Thyroid gland (tissue), 4 donors: ENCODE measurements at regions of chr16 and their contacts with region 1.

Region 1: GRCh38 chr16:81730090-81731051 is 48.7 kb upstream of the PLCG2 start:
- DNase-seq: peak; percentile 67 to 69
- H3K4me3 ChIP-seq: peak overlapping the region in 1 of 3 donors; percentile 17
- H3K27ac ChIP-seq: peak overlapping the region in 2 of 3 donors; percentile 58 to 61
- H3K4me1 ChIP-seq: peaks cover 9% of the 10 kb centered on the region in 2 donors
- H3K27me3 ChIP-seq: no peaks in the 10 kb centered on the region
- CTCF ChIP-seq: peak; percentile 35 to 67 (median 56)
- POLR2A ChIP-seq: no peak

Region 2: GRCh38 chr16:81429045-81429521 is 301.3 kb before region 1 on chr16:
- intact Hi-C with region 1: no loop called
- DNase-seq: peak; percentile 57 to 58
- H3K4me3 ChIP-seq: no peak overlapping the region
- H3K27ac ChIP-seq: no peak overlapping the region
- H3K4me1 ChIP-seq: no peaks in the 10 kb centered on the region
- H3K27me3 ChIP-seq: no peaks in the 10 kb centered on the region
- CTCF ChIP-seq: peak in 3 of 6 experiments; percentile 25 to 45 (median 28)
- POLR2A ChIP-seq: no peak

Region 3: GRCh38 chr16:81621496-81621895 is 108.9 kb before region 1 on chr16:
- intact Hi-C with region 1: loop called (anchors 2 kb)
- DNase-seq: no peak
- H3K4me3 ChIP-seq: no peak overlapping the region
- H3K27ac ChIP-seq: no peak overlapping the region
- H3K4me1 ChIP-seq: peaks cover 16 to 26% of the 10 kb centered on the region in 2 donors
- H3K27me3 ChIP-seq: no peaks in the 10 kb centered on the region
- CTCF ChIP-seq: no peak
- POLR2A ChIP-seq: no peak